Left colon (tissue), 2 donors: ENCODE measurements at regions of chr4 and their contacts with region 1.

Region 1: GRCh38 chr4:103046416-103047290 is 27.1 kb upstream of the SLC9B1 start:
- DNase-seq: peak in 1 of 2 donors; percentile 16
- ATAC-seq: peak; percentile 80

Region 2: DNA sequence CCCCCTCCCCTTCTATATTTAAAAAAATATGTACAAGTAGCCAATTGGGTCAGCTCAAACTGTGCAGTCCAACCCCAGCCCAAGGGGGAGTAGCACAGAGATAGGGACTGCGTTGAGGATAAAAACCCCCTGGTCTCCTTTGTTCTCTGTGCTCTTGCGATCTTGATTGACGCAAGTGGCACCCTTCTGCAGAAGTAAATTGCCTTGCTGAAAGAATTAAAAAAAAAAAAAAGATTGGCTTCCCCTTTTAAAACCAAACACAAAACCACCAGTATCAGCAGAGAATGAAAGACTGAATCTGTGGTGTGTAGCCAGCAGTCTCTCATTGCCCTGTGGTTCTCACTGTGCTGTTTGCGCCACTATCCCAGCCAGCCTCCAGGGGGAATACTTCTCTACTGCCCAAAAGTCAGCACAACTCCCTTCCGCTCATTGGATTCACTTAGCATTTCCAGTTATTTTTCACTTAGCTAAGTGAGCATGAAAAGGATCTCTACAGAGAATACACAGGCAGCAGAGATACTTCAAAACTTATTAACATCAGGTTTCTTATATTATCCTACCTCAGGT is 315.6 kb before region 1 on chr4:
- intact Hi-C with region 1: no loop called
- DNase-seq: no peak
- ATAC-seq: no peak

Region 3: GRCh38 chr4:102780476-102781144 is 266.0 kb before region 1 on chr4:
- intact Hi-C with region 1: no loop called
- DNase-seq: no peak
- ATAC-seq: peak; percentile 29

Region 4: DNA sequence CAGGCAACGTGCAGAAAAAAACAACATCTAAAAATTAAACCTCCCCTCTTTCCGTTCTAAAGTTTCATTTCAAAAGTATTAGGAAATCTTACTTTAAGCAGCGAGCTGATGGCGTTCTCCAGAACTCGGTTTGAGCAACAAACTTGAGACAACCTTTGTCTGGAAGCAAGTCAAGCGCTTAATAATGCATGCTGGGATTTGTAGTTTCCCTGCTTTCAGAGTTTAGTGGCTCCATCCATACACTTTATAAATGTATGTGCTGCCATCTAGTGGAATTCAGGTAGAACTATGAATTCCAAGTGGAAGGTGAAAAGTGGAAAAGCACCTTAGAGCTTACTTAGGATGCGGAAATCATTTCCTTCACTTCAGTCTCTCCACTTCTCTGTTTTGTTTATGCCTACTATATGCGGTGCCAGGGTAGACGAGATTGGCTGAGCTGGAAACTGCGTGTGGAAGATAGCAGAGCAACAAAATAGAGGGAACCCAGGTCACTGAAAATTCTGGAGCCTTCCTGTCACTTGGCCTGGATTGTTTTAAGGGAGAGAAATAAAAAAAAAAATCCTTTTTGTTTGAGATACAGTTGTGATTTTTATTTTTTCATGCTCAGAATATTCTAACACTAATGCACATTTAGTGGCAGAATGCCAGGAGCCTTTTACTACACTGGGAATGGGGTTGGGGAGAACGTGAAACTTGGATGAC is 53.2 kb after region 1 on chr4 and contains the start of gene BDH2:
- intact Hi-C with region 1: loop called in 1 of 2 experiments (anchors 10 kb)
- DNase-seq: peak; percentile 24 to 39
- ATAC-seq: peak; percentile 96
- total RNA-seq, gene BDH2: 28.6 to 35.4 TPM

Region 5: DNA sequence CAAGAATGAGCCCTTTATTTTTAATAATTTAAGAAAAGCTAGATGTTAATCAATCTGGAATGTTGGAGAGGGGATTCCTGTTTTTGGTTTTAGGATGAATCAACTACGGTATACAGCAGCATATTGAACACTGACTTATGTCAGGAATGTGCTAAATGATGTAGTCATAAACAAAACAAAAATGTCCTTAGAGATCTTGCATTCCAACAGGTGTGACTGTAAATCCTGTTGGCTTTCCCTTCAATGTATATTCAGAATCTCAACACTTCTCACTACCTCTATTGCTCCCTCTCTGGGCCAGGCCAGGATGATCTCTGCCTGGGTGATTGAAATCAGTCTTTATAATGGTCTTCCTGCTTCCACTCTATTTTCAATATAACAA is 90.8 kb after region 1 on chr4:
- intact Hi-C with region 1: no loop called
- DNase-seq: no peak
- ATAC-seq: no peak